ENCODE measurements at regions of chr4 and their contacts with region 1.

Region 1: GRCh38 chr4:54233277-54233696 is 4.2 kb downstream of the PDGFRA start:
- DNase-seq: peak; percentile 76
- H3K4me3 Mint-ChIP-seq: peak overlapping the region; percentile 49
- H3K27ac Mint-ChIP-seq: no peak overlapping the region
- H3K4me1 Mint-ChIP-seq: peaks cover 26% of the 10 kb centered on the region
- H3K27me3 Mint-ChIP-seq: peaks cover 69% of the 10 kb centered on the region

Region 2: DNA sequence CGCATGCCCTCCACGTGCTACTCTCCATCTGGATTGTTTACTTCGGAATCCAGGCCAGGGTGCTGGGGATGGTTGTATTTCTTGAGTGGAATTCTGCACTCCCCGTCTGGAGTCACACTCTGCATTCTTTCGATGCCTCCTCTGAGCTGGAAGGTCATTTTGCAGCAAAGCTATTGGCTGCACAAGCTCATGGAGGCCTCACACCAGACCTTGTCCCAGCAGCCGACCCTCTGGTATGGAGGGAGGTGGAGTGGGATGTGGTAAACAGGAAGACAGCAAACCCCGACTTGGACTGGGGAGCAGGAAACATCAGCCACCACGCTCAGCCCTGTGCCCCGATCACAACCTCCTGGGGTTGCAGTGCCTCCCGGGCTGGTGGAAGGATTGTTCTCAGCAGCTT is 416.7 kb before region 1 on chr4:
- CTCF ChIA-PET with region 1: no interaction called
- POLR2A ChIA-PET with region 1: no interaction called
- DNase-seq: no peak
- H3K4me3 Mint-ChIP-seq: no peak overlapping the region
- H3K27ac Mint-ChIP-seq: no peak overlapping the region
- H3K4me1 Mint-ChIP-seq: no peaks in the 10 kb centered on the region
- H3K27me3 Mint-ChIP-seq: no peaks in the 10 kb centered on the region

Region 3: DNA sequence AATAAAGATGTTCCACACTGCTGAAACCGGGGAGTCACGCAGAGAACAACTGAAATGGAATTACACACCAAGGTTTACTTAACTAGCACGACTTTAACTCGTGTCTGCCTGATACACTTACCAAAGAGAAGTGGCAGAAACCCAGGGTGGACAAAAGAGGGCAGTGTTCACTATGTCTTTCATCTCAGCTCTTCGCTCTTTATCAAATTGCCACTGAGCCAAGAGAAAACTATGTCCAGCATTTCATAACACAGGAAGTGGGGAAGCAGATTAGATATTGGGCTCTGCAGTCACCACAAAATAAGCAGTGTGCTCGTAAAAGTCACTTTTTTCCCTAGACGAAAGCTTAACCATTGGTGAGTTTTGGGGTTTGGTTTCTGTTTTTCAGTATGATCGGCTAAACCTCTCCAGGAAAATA is 324.6 kb before region 1 on chr4:
- CTCF ChIA-PET with region 1: interaction called, 40 read pairs
- POLR2A ChIA-PET with region 1: no interaction called
- DNase-seq: peak; percentile 20
- H3K4me3 Mint-ChIP-seq: no peak overlapping the region
- H3K27ac Mint-ChIP-seq: no peak overlapping the region
- H3K4me1 Mint-ChIP-seq: peaks cover 13% of the 10 kb centered on the region
- H3K27me3 Mint-ChIP-seq: peaks cover 41% of the 10 kb centered on the region

Region 4: GRCh38 chr4:54165438-54165837 is 67.8 kb before region 1 on chr4:
- CTCF ChIA-PET with region 1: no interaction called
- POLR2A ChIA-PET with region 1: no interaction called
- DNase-seq: no peak
- H3K4me3 Mint-ChIP-seq: no peak overlapping the region
- H3K27ac Mint-ChIP-seq: no peak overlapping the region
- H3K4me1 Mint-ChIP-seq: no peaks in the 10 kb centered on the region
- H3K27me3 Mint-ChIP-seq: peaks cover 10% of the 10 kb centered on the region

Region 5: DNA sequence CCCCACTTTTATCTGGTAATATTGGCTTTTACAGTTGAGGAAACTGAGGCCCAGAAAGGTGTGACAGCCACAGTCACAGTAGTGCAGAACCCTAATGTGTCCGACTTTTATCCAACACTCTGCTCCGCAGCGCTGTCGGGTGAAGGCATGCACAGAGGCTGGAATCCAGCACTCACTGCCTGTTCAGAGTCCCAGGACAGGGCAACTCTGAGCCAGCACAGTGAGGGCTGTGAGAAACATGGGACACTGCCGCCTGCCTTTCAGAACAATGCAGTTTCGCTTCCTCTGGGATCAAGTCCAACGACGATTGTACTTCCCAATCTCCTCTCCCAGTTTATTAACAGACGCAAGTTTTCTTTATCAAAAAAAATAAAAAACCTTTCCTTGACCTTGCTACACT is 46.1 kb before region 1 on chr4:
- CTCF ChIA-PET with region 1: no interaction called
- POLR2A ChIA-PET with region 1: no interaction called
- DNase-seq: no peak
- H3K4me3 Mint-ChIP-seq: no peak overlapping the region
- H3K27ac Mint-ChIP-seq: no peak overlapping the region
- H3K4me1 Mint-ChIP-seq: no peaks in the 10 kb centered on the region
- H3K27me3 Mint-ChIP-seq: no peaks in the 10 kb centered on the region

Region 6: GRCh38 chr4:54217642-54218495 is 15.4 kb before region 1 on chr4:
- CTCF ChIA-PET with region 1: interaction called, 16 read pairs
- POLR2A ChIA-PET with region 1: no interaction called
- DNase-seq: peak; percentile 53
- H3K4me3 Mint-ChIP-seq: no peak overlapping the region
- H3K27ac Mint-ChIP-seq: no peak overlapping the region
- H3K4me1 Mint-ChIP-seq: peaks cover 3% of the 10 kb centered on the region
- H3K27me3 Mint-ChIP-seq: peaks cover 33% of the 10 kb centered on the region

Region 7: GRCh38 chr4:54277691-54278090 is 44.4 kb after region 1 on chr4:
- CTCF ChIA-PET with region 1: interaction called, 16 read pairs
- POLR2A ChIA-PET with region 1: no interaction called
- DNase-seq: peak; percentile 18
- H3K4me3 Mint-ChIP-seq: peak overlapping the region; percentile 29
- H3K27ac Mint-ChIP-seq: peak overlapping the region; percentile 58
- H3K4me1 Mint-ChIP-seq: peaks cover 38% of the 10 kb centered on the region
- H3K27me3 Mint-ChIP-seq: no peaks in the 10 kb centered on the region